OCI-LY7 (cell line): ENCODE measurements at regions of chr5 and their contacts with region 1.

Region 1: GRCh38 chr5:34929150-34929719 is at the start of gene DNAJC21:
- DNase-seq: peak; percentile 96
- H3K4me3 ChIP-seq: peak within 1 kb of the TSS; percentile 83
- H3K27ac ChIP-seq: peak within 1 kb of the TSS; percentile 46
- H3K4me1 ChIP-seq: peaks cover 38% of the 10 kb centered on the region
- CTCF ChIP-seq: no peak
- total RNA-seq, gene DNAJC21: 29.4 and 43.7 TPM in 2 replicates

Region 2: DNA sequence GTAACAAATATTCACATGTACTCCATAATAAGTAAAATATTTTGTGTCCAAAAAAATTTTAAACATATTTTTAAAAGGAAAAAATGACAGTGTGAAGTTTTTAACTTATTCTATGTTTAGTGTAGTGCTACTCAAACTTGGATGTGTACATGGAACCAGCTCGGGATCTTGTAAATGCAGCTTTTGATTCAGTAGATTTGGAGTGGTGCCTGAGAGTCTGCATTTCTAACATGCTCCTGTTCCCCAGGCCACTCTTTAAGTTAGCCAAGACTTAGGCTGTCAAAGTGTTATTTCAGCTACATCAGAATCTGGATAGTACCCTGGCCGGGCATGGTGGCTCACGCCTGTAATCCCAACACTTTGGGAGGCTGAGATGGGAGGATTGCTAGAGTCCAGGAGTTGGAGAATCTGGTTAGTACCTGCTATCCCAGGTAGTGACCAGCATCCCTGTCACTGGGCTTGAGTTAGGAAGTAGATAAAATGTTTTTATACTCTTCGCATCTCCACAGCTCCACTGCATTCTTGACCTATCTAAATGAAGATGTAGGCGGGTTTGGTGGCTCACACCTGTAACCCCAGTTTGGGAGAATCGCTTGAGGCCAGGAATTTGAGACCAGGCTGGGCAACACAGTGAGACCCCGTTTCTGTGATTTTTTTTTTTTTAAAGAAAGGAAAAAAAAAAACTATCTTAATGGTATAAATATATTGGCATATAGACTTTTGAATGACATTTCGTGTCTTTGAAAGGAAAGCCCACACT is 151.0 kb before region 1 on chr5:
- CTCF ChIA-PET with region 1: no interaction called
- POLR2A ChIA-PET with region 1: no interaction called
- intact Hi-C with region 1: no loop called
- DNase-seq: no peak
- H3K4me3 ChIP-seq: no peak overlapping the region
- H3K27ac ChIP-seq: no peak overlapping the region
- H3K4me1 ChIP-seq: no peaks in the 10 kb centered on the region
- CTCF ChIP-seq: no peak

Region 3: GRCh38 chr5:34941936-34942335 is 12.7 kb after region 1 on chr5:
- CTCF ChIA-PET with region 1: no interaction called
- POLR2A ChIA-PET with region 1: interaction called, 10 read pairs
- intact Hi-C with region 1: no loop called
- DNase-seq: no peak
- H3K4me3 ChIP-seq: no peak overlapping the region
- H3K27ac ChIP-seq: no peak overlapping the region
- H3K4me1 ChIP-seq: no peaks in the 10 kb centered on the region
- CTCF ChIP-seq: no peak

Region 4: GRCh38 chr5:35598707-35599370 is 669.6 kb after region 1 on chr5:
- CTCF ChIA-PET with region 1: no interaction called
- POLR2A ChIA-PET with region 1: no interaction called
- intact Hi-C with region 1: no loop called
- DNase-seq: peak; percentile 18
- H3K4me3 ChIP-seq: no peak overlapping the region
- H3K27ac ChIP-seq: no peak overlapping the region
- H3K4me1 ChIP-seq: no peaks in the 10 kb centered on the region
- CTCF ChIP-seq: peak; percentile 52